IMR-90 (cell line): ENCODE measurements at regions of chr1 and their contacts with region 1.

Region 1: GRCh38 chr1:43529206-43529731 is 1.4 kb upstream of the PTPRF start:
- DNase-seq: peak; percentile 90
- ATAC-seq: peak; percentile 64
- H3K4me3 ChIP-seq: no peak overlapping the region
- H3K27ac ChIP-seq: no peak overlapping the region
- H3K4me1 ChIP-seq: peaks cover 8% of the 10 kb centered on the region
- H3K27me3 ChIP-seq: no peaks in the 10 kb centered on the region
- CTCF ChIP-seq: peak; percentile 96
- POLR2A ChIP-seq: no peak
- RAD21 ChIP-seq: peak; percentile 93

Region 2: DNA sequence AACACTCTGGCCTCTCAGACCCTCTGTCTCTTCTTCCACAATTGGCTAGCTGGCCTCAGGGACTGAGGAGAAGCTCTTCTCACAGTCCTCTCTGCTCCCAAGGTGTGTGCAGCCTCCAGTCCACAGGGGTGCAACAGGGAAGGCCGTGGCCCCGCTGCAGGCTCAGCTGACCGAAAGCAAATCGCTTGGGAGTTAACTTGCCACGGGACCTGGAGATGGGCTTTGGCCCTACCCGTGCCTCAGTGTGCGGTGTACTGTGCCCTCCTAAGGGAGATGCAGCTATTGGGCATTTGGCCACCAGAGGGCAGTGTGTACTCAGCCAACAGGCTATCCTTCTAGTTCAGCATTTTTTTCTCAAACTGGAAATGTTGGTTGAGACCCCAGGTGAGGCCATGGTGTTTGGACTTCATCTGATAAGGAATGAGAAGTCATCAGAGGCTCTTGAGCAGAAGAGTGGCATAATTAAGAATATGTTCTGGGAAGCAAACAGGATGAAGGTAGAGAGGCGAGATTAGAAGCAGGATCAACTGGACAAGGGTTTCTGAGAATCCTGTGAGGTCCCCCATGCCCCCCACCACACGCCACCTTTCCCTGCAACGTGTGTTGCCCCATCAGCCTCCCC is 302.0 kb before region 1 on chr1:
- CTCF ChIA-PET with region 1: no interaction called
- POLR2A ChIA-PET with region 1: no interaction called
- dilution Hi-C with region 1: no loop called
- in situ Hi-C with region 1: no loop called
- intact Hi-C with region 1: loop called (anchors 5 kb)
- DNase-seq: peak; percentile 70
- ATAC-seq: peak; percentile 81
- H3K4me3 ChIP-seq: no peak overlapping the region
- H3K27ac ChIP-seq: no peak overlapping the region
- H3K4me1 ChIP-seq: peaks cover 18% of the 10 kb centered on the region
- H3K27me3 ChIP-seq: no peaks in the 10 kb centered on the region
- CTCF ChIP-seq: peak; percentile 92
- POLR2A ChIP-seq: 0 out of 2 replicates have a peak, but pooled peaks have one; percentile 45
- RAD21 ChIP-seq: peak; percentile 98

Region 3: GRCh38 chr1:43650310-43651085 is 121.2 kb after region 1 on chr1:
- CTCF ChIA-PET with region 1: interaction called, 3 read pairs
- POLR2A ChIA-PET with region 1: no interaction called
- dilution Hi-C with region 1: no loop called
- in situ Hi-C with region 1: no loop called
- intact Hi-C with region 1: loop called (anchors 1 kb)
- DNase-seq: peak; percentile 99
- ATAC-seq: peak; percentile 88
- H3K4me3 ChIP-seq: peak overlapping the region; percentile 87
- H3K27ac ChIP-seq: peak overlapping the region; percentile 95
- H3K4me1 ChIP-seq: peaks cover 4% of the 10 kb centered on the region; the same call in 1 of the 2 replicates
- H3K27me3 ChIP-seq: no peaks in the 10 kb centered on the region
- CTCF ChIP-seq: no peak
- POLR2A ChIP-seq: peak; percentile 100
- RAD21 ChIP-seq: 0 out of 2 replicates have a peak, but pooled peaks have one; percentile 4

Region 4: GRCh38 chr1:43706598-43707495 is 177.6 kb after region 1 on chr1:
- CTCF ChIA-PET with region 1: no interaction called
- POLR2A ChIA-PET with region 1: no interaction called
- dilution Hi-C with region 1: no loop called
- in situ Hi-C with region 1: no loop called
- intact Hi-C with region 1: loop called (anchors 1 kb)
- DNase-seq: peak; percentile 90
- ATAC-seq: peak; percentile 89
- H3K4me3 ChIP-seq: peak overlapping the region; percentile 84
- H3K27ac ChIP-seq: peak overlapping the region; percentile 63
- H3K4me1 ChIP-seq: peaks cover 11% of the 10 kb centered on the region
- H3K27me3 ChIP-seq: no peaks in the 10 kb centered on the region
- CTCF ChIP-seq: no peak
- POLR2A ChIP-seq: peak; percentile 62; the same call in 1 of the 2 replicates
- RAD21 ChIP-seq: no peak

Region 5: DNA sequence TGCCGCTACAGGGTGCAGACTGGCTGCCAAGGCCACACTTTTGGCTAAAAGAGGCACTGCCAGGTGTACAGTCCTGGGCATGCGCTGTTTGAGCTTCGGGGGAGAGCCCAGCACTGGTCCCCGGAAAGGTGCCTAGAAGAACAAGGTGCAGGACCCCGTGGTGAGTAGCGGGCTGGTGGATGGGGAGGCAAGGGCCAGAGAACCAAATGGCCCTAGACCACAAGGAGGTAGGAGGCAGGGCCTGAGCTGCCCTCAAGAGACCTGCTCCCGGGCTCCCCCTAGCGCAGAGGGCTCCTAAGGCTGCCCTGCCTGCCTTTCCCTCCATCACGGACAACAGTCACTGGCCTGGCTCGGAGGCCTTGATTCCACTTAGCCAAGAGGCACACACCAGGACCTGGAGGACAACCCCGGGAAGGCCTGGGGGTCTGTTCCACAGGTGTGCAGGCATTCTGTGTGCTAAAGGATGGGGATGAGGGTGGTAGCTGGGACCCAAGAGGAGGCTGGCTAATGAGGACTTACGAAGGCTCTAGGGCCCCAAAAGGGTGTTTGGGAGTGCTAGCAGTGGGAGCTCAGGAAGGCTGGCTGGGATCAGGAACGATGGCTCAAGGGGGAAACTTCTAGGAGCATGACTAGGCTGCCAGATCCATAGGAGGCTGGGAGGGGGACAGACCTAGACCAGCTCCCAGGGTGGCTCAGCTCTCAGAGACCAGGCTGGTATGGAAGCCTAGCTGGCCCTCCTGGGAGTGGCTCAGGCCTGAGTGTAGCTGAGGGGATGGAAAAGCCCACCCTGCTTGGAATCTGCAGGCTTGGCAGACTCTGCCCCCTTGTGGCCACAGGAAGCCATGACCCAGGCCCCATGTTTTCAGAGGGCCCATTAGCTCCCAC is 405.1 kb after region 1 on chr1:
- CTCF ChIA-PET with region 1: interaction called, 4 read pairs
- POLR2A ChIA-PET with region 1: no interaction called
- dilution Hi-C with region 1: no loop called
- in situ Hi-C with region 1: no loop called
- intact Hi-C with region 1: loop called (anchors 1 kb)
- DNase-seq: peak; percentile 53
- ATAC-seq: peak; percentile 48
- H3K4me3 ChIP-seq: no peak overlapping the region
- H3K27ac ChIP-seq: no peak overlapping the region
- H3K4me1 ChIP-seq: peaks cover 10% of the 10 kb centered on the region
- H3K27me3 ChIP-seq: no peaks in the 10 kb centered on the region; the same call in 1 of the 2 replicates
- CTCF ChIP-seq: peak; percentile 84
- POLR2A ChIP-seq: no peak
- RAD21 ChIP-seq: peak; percentile 87

Region 6: DNA sequence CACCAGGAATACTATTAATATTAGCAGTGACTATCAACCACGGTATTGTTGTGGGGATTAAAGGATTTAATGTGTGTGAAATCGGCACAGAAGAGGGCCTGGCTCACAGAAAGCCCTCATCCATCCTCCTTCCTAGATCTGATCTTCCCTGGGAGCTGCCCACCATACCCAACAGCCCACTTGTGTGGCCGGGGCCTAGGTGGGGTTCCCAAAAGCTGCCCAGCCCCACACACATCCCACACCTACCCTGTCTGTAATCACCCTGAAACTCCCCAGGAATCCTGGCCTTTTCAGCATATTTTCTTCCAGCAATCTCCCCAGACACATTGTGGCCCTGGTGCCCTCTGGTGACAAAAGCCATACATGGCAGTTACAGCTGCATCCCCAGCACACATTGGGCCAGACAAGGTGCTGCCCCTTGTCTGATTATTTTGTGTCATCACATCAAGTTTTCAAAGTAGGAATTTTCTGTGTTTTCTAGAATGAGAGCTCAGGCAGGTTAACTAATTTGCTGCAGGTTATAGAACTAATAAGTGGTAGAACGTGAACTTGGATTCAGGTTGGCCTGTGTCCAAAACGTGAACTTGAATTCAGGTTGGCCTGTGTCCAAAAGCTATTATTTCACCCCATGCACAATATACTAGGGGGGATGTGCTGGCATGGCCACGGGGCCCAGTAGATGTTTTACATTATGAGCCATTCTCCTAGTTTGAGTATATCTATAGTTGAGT is 507.3 kb after region 1 on chr1:
- CTCF ChIA-PET with region 1: no interaction called
- POLR2A ChIA-PET with region 1: no interaction called
- dilution Hi-C with region 1: no loop called
- in situ Hi-C with region 1: no loop called
- intact Hi-C with region 1: loop called (anchors 5 kb)
- DNase-seq: peak; percentile 61
- ATAC-seq: peak; percentile 80
- H3K4me3 ChIP-seq: no peak overlapping the region
- H3K27ac ChIP-seq: no peak overlapping the region
- H3K4me1 ChIP-seq: peaks cover 7% of the 10 kb centered on the region; the same call in 1 of the 2 replicates
- H3K27me3 ChIP-seq: no peaks in the 10 kb centered on the region
- CTCF ChIP-seq: peak; percentile 73
- POLR2A ChIP-seq: no peak
- RAD21 ChIP-seq: peak; percentile 81